ENCODE measurements at regions of chrX and their contacts with region 1.

Region 1: GRCh38 chrX:69538321-69538876 is 34.3 kb downstream of the NALF2 start:
- DNase-seq: peak; percentile 80
- H3K4me3 ChIP-seq: peak overlapping the region; percentile 19 to 49 (median 44)
- H3K27ac ChIP-seq: peak overlapping the region in 1 of 4 donors; percentile 42
- H3K4me1 ChIP-seq: no peaks in the 10 kb centered on the region
- H3K27me3 ChIP-seq: peaks cover 0 to 6% (median 0%) of the 10 kb centered on the region in 3 donors
- CTCF ChIP-seq: peak; percentile 47 to 69 (median 57)
- EP300 ChIP-seq: no peak
- POLR2A ChIP-seq: no peak

Region 2: GRCh38 chrX:69133921-69134542 is 404.4 kb before region 1 on chrX:
- intact Hi-C with region 1: no loop called
- DNase-seq: no peak
- H3K4me3 ChIP-seq: no peak overlapping the region
- H3K27ac ChIP-seq: no peak overlapping the region
- H3K4me1 ChIP-seq: peaks cover 0 to 16% (median 4%) of the 10 kb centered on the region in 4 donors
- H3K27me3 ChIP-seq: no peaks in the 10 kb centered on the region
- CTCF ChIP-seq: peak in 1 of 4 experiments; percentile 31
- EP300 ChIP-seq: no peak
- POLR2A ChIP-seq: no peak

Region 3: DNA sequence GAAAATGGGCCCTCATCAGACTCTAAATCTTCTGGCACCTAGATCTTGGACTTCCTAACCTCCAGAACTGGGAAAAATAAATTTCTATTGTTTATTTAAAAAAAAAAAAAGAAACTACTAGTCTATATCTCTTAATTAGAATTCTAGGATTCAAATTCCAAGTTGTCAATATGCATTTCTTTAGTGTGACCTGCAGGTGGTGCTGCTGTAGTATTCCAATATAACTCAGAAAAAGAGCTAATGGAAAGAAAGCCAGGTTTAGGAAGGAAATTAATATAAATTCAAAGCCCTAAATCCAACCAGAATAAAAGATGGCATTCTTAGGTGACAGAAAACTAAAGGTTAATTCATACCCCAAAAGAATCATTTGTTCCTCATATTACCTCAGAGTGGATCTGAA is 114.2 kb before region 1 on chrX:
- intact Hi-C with region 1: no loop called
- DNase-seq: no peak
- H3K4me3 ChIP-seq: no peak overlapping the region
- H3K27ac ChIP-seq: no peak overlapping the region
- H3K4me1 ChIP-seq: no peaks in the 10 kb centered on the region
- H3K27me3 ChIP-seq: no peaks in the 10 kb centered on the region
- CTCF ChIP-seq: no peak
- EP300 ChIP-seq: no peak
- POLR2A ChIP-seq: no peak

Region 4: DNA sequence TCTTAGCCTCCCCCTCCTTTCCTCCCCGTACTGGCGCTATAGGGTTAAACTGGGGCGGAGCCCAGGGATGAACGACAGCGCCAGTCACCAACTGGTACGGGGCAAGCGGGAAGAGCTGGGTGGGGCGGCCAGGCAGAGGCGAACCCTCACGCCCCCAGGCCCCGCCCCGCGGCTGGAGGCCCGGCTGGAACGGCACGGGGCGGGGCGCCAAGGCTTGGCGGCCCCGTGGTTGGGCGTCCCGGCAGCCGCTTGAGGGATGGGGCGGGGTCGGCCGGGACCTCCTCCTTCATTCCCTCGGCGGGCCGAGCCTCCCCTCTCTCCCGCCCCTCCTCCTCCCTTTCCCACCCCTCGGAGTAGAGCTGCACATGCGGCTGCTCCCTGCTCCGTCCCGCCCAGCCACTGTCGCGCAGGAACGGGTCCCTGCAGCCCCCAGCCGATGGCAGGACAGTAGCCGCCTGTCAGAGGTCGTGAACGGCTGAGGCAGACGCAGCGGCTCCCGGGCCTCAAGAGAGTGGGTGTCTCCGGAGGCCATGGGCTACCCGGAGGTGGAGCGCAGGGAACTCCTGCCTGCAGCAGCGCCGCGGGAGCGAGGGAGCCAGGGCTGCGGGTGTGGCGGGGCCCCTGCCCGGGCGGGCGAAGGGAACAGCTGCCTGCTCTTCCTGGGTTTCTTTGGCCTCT is 77.5 kb after region 1 on chrX and contains the start of gene EDA:
- intact Hi-C with region 1: loop called (anchors 1 kb)
- DNase-seq: peak; percentile 92
- H3K4me3 ChIP-seq: peak within 1 kb of the TSS; percentile 44 to 65 (median 62)
- H3K27ac ChIP-seq: peak within 1 kb of the TSS; percentile 42 to 72 (median 48)
- H3K4me1 ChIP-seq: peaks cover 0 to 4% (median 0%) of the 10 kb centered on the region in 4 donors
- H3K27me3 ChIP-seq: no peaks in the 10 kb centered on the region
- CTCF ChIP-seq: no peak
- EP300 ChIP-seq: no peak
- POLR2A ChIP-seq: no peak
- total RNA-seq, gene EDA: 3.6 to 6.4 (median 4.1) TPM

Region 5: GRCh38 chrX:70030301-70030767 is 491.9 kb after region 1 on chrX:
- intact Hi-C with region 1: loop called (anchors 2 kb)
- DNase-seq: no peak
- H3K4me3 ChIP-seq: no peak overlapping the region
- H3K27ac ChIP-seq: no peak overlapping the region
- H3K4me1 ChIP-seq: no peaks in the 10 kb centered on the region
- H3K27me3 ChIP-seq: no peaks in the 10 kb centered on the region
- CTCF ChIP-seq: peak in 3 of 4 experiments; percentile 41 to 52 (median 43)
- EP300 ChIP-seq: no peak
- POLR2A ChIP-seq: no peak

Region 6: GRCh38 chrX:70096052-70096451 is 557.7 kb after region 1 on chrX:
- intact Hi-C with region 1: loop called (anchors 2 kb)
- DNase-seq: no peak
- H3K4me3 ChIP-seq: no peak overlapping the region
- H3K27ac ChIP-seq: no peak overlapping the region
- H3K4me1 ChIP-seq: no peaks in the 10 kb centered on the region
- H3K27me3 ChIP-seq: no peaks in the 10 kb centered on the region
- CTCF ChIP-seq: no peak
- EP300 ChIP-seq: no peak
- POLR2A ChIP-seq: no peak